Activated CD4-positive, alpha-beta T cell treated with anti-CD3 and anti-CD28 coated beads for 36 hours (primary cell): ENCODE measurements at regions of chr13 and their contacts with region 1.

Region 1: GRCh38 chr13:73708393-73708985 is 425.7 kb downstream of the KLF12 start:
- DNase-seq: peak; percentile 66
- ATAC-seq: peak; percentile 84
- H3K4me3 Mint-ChIP-seq: no peak overlapping the region
- H3K27ac Mint-ChIP-seq: no peak overlapping the region
- H3K4me1 Mint-ChIP-seq: peaks cover 15% of the 10 kb centered on the region
- H3K27me3 Mint-ChIP-seq: no peaks in the 10 kb centered on the region

Region 2: GRCh38 chr13:72643311-72643989 is 1065.0 kb before region 1 on chr13:
- CTCF ChIA-PET with region 1: no interaction called
- POLR2A ChIA-PET with region 1: no interaction called
- intact Hi-C with region 1: loop called in 1 of 2 experiments (anchors 2 kb)
- DNase-seq: peak; percentile 80
- ATAC-seq: peak; percentile 47
- H3K4me3 Mint-ChIP-seq: no peak overlapping the region
- H3K27ac Mint-ChIP-seq: no peak overlapping the region
- H3K4me1 Mint-ChIP-seq: no peaks in the 10 kb centered on the region
- H3K27me3 Mint-ChIP-seq: peaks cover 3% of the 10 kb centered on the region

Region 3: GRCh38 chr13:72808917-72809500 is 899.5 kb before region 1 on chr13:
- CTCF ChIA-PET with region 1: interaction called, 3 read pairs
- POLR2A ChIA-PET with region 1: no interaction called
- intact Hi-C with region 1: loop called (anchors 1 to 10 kb)
- DNase-seq: no peak
- ATAC-seq: no peak
- H3K4me3 Mint-ChIP-seq: no peak overlapping the region
- H3K27ac Mint-ChIP-seq: no peak overlapping the region
- H3K4me1 Mint-ChIP-seq: no peaks in the 10 kb centered on the region
- H3K27me3 Mint-ChIP-seq: no peaks in the 10 kb centered on the region

Region 4: GRCh38 chr13:72839831-72840426 is 868.6 kb before region 1 on chr13:
- CTCF ChIA-PET with region 1: no interaction called
- POLR2A ChIA-PET with region 1: no interaction called
- intact Hi-C with region 1: loop called (anchors 1 to 10 kb)
- DNase-seq: peak; percentile 65
- ATAC-seq: peak; percentile 86
- H3K4me3 Mint-ChIP-seq: no peak overlapping the region
- H3K27ac Mint-ChIP-seq: no peak overlapping the region
- H3K4me1 Mint-ChIP-seq: no peaks in the 10 kb centered on the region
- H3K27me3 Mint-ChIP-seq: no peaks in the 10 kb centered on the region

Region 5: GRCh38 chr13:73058736-73059459 is 649.6 kb before region 1 on chr13 and contains the start of gene KLF5:
- CTCF ChIA-PET with region 1: no interaction called
- POLR2A ChIA-PET with region 1: no interaction called
- intact Hi-C with region 1: loop called (anchors 1 to 5 kb)
- DNase-seq: peak; percentile 98
- ATAC-seq: peak; percentile 98
- H3K4me3 Mint-ChIP-seq: peak within 1 kb of the TSS; percentile 76
- H3K27ac Mint-ChIP-seq: peak within 1 kb of the TSS; percentile 45
- H3K4me1 Mint-ChIP-seq: peaks cover 16% of the 10 kb centered on the region
- H3K27me3 Mint-ChIP-seq: peaks cover 24% of the 10 kb centered on the region
- total RNA-seq, gene KLF5: 2.3 to 4.6 TPM

Region 6: GRCh38 chr13:73531014-73531413 is 177.5 kb before region 1 on chr13:
- CTCF ChIA-PET with region 1: no interaction called
- POLR2A ChIA-PET with region 1: no interaction called
- intact Hi-C with region 1: loop called in 1 of 2 experiments (anchors 10 kb)
- DNase-seq: no peak
- ATAC-seq: no peak
- H3K4me3 Mint-ChIP-seq: no peak overlapping the region
- H3K27ac Mint-ChIP-seq: no peak overlapping the region
- H3K4me1 Mint-ChIP-seq: no peaks in the 10 kb centered on the region
- H3K27me3 Mint-ChIP-seq: no peaks in the 10 kb centered on the region